Activated naive CD4-positive, alpha-beta T cell treated with anti-CD3 and anti-CD28 coated beads for 36 hours (primary cell): ENCODE measurements at regions of chr1 and their contacts with region 1.

Region 1: DNA sequence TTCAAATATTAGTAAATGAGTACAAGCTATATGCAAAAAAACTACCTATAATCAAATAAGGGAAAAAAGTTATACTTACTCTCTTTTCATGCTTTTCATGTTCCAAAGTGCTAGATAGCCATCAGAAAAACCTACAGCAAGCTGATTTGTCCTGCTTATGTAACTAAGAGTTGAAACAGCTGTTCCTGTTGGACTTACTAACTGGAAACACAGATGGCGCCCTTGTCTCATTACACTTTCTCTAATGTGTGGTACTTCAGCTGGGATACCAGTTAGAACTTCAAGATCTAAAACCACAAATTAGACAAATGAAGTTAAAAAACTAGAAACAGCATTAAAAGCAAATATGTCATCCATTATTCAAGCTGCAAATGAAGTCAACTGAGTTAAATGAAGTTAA is 24.3 kb downstream of the AHCTF1 start:
- DNase-seq: peak; percentile 32
- H3K4me3 Mint-ChIP-seq: no peak overlapping the region
- H3K27ac Mint-ChIP-seq: no peak overlapping the region
- H3K4me1 Mint-ChIP-seq: peaks cover 2% of the 10 kb centered on the region
- H3K27me3 Mint-ChIP-seq: no peaks in the 10 kb centered on the region

Region 2: GRCh38 chr1:246537887-246538286 is 369.6 kb before region 1 on chr1:
- CTCF ChIA-PET with region 1: no interaction called
- intact Hi-C with region 1: no loop called
- DNase-seq: no peak
- H3K4me3 Mint-ChIP-seq: no peak overlapping the region
- H3K27ac Mint-ChIP-seq: no peak overlapping the region
- H3K4me1 Mint-ChIP-seq: no peaks in the 10 kb centered on the region
- H3K27me3 Mint-ChIP-seq: no peaks in the 10 kb centered on the region

Region 3: GRCh38 chr1:246959944-246960693 is 52.6 kb after region 1 on chr1:
- CTCF ChIA-PET with region 1: interaction called, 3 read pairs
- intact Hi-C with region 1: loop called (anchors 1 kb)
- DNase-seq: no peak
- H3K4me3 Mint-ChIP-seq: no peak overlapping the region
- H3K27ac Mint-ChIP-seq: peak overlapping the region; percentile 4
- H3K4me1 Mint-ChIP-seq: peaks cover 10% of the 10 kb centered on the region
- H3K27me3 Mint-ChIP-seq: no peaks in the 10 kb centered on the region